H1 (cell line): ENCODE measurements at regions of chr4 and their contacts with region 1.

Region 1: DNA sequence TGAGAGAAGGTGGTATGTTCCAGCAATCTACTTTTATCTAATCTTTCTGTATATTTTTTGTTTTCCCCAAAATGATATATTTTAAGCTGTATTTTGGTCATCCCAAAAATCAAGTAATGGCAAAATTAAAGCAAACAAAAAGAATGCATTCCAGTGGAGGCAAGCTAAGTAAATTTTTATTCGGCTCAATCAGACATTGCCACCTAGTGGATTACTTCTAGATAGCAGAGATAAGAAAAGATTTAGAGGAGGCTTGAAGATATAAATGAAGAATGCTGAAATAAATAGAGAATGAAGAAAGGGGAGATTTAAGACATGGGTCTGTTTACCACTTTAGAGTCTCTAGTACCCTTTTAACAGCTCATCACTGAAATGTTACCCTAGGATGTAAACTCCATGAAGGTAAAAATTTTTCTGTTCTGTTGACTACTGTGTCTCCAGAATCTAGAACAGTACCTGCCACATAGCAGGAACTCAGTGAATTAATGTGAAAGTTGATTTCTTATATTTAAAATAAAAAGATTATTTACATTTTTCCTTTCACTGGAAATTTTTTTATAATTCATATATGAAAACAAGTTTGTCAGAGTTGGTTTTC is 110.9 kb upstream of the ANK2 start:
- DNase-seq: no peak
- H3K4me3 ChIP-seq: no peak overlapping the region
- H3K27ac ChIP-seq: no peak overlapping the region
- H3K4me1 ChIP-seq: peaks cover 0 to 2% (median under 1%) of the 10 kb centered on the region in 4 experiments; a peak in 1 of 7 replicates
- H3K27me3 ChIP-seq: no peaks in the 10 kb centered on the region
- CTCF ChIP-seq: peak in 2 of 3 experiments; percentile 53 to 63; a peak in 2 of 4 replicates
- EP300 ChIP-seq: no peak
- POLR2A ChIP-seq: no peak
- RAD21 ChIP-seq: peak; percentile 84 to 88

Region 2: GRCh38 chr4:112840061-112840460 is 98.5 kb before region 1 on chr4:
- CTCF ChIA-PET with region 1: interaction called, 15 read pairs
- POLR2A ChIA-PET with region 1: no interaction called
- DNase-seq: no peak
- H3K4me3 ChIP-seq: no peak overlapping the region
- H3K27ac ChIP-seq: no peak overlapping the region
- H3K4me1 ChIP-seq: peaks cover 0 to 3% (median 0%) of the 10 kb centered on the region in 4 experiments; a peak in 2 of 7 replicates
- H3K27me3 ChIP-seq: no peaks in the 10 kb centered on the region
- CTCF ChIP-seq: no peak
- EP300 ChIP-seq: no peak
- POLR2A ChIP-seq: no peak
- RAD21 ChIP-seq: no peak

Region 3: DNA sequence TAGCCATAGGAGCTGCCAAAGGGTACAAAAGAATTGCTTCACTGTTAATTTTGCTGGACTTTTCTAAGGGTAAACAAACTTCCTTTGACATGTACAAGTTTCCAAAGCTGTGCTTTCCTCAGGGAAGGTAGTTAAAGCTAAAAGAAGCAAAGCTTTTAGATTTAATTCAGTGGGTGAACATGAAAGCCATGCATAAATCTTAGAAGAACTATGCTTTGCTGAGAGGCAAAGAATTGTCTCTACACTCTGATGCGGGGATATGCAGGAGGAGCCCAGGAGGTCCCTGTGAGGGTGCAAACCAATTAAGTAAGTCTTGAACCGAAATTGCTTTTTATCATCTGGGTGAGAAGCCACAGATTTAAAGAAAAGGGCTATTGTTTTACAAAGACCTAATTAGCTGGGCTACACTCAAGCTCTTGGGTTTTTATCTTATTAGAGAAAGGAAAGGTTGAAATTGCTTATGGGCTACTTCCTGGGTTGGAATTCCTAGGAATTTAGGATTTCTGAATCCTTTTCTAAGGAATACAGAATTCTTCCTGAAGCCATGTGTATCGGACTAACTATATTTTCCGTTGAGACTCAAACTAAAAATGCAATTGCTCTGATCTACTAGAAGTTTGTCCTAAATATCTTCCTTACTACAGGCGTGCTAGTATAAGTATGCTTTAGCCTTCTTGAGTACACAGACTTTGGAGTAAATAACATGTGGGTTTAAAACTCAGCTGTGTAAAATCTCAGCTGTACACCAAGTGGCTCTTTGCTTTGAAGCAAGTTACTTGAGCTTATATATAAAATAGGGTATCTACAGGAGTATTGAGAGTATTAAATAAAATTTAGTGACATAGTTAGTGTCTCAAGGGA is 77.5 kb before region 1 on chr4:
- CTCF ChIA-PET with region 1: interaction called, 49 read pairs
- POLR2A ChIA-PET with region 1: interaction called, 3 read pairs
- DNase-seq: peak in 1 of 2 experiments; percentile 21
- H3K4me3 ChIP-seq: peak overlapping the region in 1 of 4 experiments; percentile 31; a peak in 2 of 8 replicates
- H3K27ac ChIP-seq: 0 out of 2 replicates have a peak overlapping the region, but pooled peaks have one; percentile 42
- H3K4me1 ChIP-seq: peaks cover 0 to 22% (median 14%) of the 10 kb centered on the region in 4 experiments; a peak in 6 of 7 replicates
- H3K27me3 ChIP-seq: no peaks in the 10 kb centered on the region
- CTCF ChIP-seq: no peak
- EP300 ChIP-seq: no peak
- POLR2A ChIP-seq: no peak
- RAD21 ChIP-seq: no peak

Region 4: GRCh38 chr4:112901962-112902411 is 36.6 kb before region 1 on chr4:
- CTCF ChIA-PET with region 1: interaction called, 20 read pairs
- POLR2A ChIA-PET with region 1: no interaction called
- DNase-seq: no peak
- H3K4me3 ChIP-seq: no peak overlapping the region
- H3K27ac ChIP-seq: no peak overlapping the region
- H3K4me1 ChIP-seq: peaks cover 0 to 16% (median 9%) of the 10 kb centered on the region in 4 experiments; a peak in 4 of 7 replicates
- H3K27me3 ChIP-seq: no peaks in the 10 kb centered on the region
- CTCF ChIP-seq: no peak
- EP300 ChIP-seq: no peak
- POLR2A ChIP-seq: no peak
- RAD21 ChIP-seq: no peak

Region 5: DNA sequence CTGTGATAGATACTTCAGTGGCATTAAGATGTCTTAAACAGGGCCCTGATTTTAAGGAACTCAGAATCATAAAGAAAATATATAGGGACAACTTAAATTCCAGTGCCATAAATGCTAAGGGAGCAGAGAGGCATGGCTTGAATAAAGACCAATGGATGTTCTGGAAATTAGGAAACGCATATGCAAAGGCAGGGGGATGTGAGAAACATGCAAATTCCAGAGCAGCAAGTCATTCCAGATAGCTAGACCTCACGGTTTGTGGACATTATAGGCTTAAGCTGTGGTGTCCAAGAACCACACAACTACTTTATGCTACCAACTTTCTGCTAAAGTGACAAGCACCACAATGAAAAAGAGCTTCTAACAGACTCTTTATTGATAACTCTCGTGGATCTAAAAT is 21.7 kb before region 1 on chr4:
- CTCF ChIA-PET with region 1: interaction called, 28 read pairs
- POLR2A ChIA-PET with region 1: no interaction called
- DNase-seq: no peak
- H3K4me3 ChIP-seq: no peak overlapping the region
- H3K27ac ChIP-seq: no peak overlapping the region
- H3K4me1 ChIP-seq: peaks cover 0 to 3% (median 0%) of the 10 kb centered on the region in 4 experiments; a peak in 1 of 7 replicates
- H3K27me3 ChIP-seq: no peaks in the 10 kb centered on the region
- CTCF ChIP-seq: no peak
- EP300 ChIP-seq: no peak
- POLR2A ChIP-seq: no peak
- RAD21 ChIP-seq: no peak

Region 6: GRCh38 chr4:112951362-112952312 is 13.1 kb after region 1 on chr4:
- CTCF ChIA-PET with region 1: interaction called, 45 read pairs
- POLR2A ChIA-PET with region 1: no interaction called
- DNase-seq: no peak
- H3K4me3 ChIP-seq: no peak overlapping the region
- H3K27ac ChIP-seq: no peak overlapping the region
- H3K4me1 ChIP-seq: no peaks in the 10 kb centered on the region
- H3K27me3 ChIP-seq: no peaks in the 10 kb centered on the region
- CTCF ChIP-seq: peak in 2 of 3 experiments; percentile 3 to 35; a peak in 2 of 4 replicates
- EP300 ChIP-seq: no peak
- POLR2A ChIP-seq: no peak
- RAD21 ChIP-seq: peak in 1 of 2 experiments; percentile 24; a peak in 2 of 4 replicates